ENCODE measurements at regions of chr1 and their contacts with region 1.

Region 1: GRCh38 chr1:235843461-235843961 is 23.2 kb downstream of the LYST start:
- DNase-seq: peak; percentile 56
- H3K4me3 Mint-ChIP-seq: no peak overlapping the region
- H3K27ac Mint-ChIP-seq: no peak overlapping the region
- H3K4me1 Mint-ChIP-seq: peaks cover 61% of the 10 kb centered on the region
- H3K27me3 Mint-ChIP-seq: no peaks in the 10 kb centered on the region

Region 2: DNA sequence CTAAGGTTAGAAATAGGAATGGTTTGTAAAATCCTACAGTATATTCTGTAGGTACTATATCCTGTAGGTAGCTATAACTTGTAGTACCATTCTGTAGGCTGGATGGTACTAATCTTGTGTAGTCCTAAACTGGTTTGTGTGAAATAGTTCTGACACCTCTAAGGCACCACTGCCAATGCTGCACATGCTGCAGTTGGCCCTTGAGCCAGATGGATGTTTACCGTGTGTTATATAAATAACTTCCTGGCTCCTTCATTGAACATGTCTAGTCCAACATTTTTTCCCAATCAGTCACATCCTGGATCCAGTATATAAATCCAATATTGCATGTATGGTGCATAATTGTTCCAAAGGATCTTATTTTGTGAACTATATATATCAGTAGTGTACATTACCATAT is 104.4 kb before region 1 on chr1:
- intact Hi-C with region 1: loop called (anchors 10 kb)
- DNase-seq: no peak
- H3K4me3 Mint-ChIP-seq: no peak overlapping the region
- H3K27ac Mint-ChIP-seq: no peak overlapping the region
- H3K4me1 Mint-ChIP-seq: peaks cover 4% of the 10 kb centered on the region
- H3K27me3 Mint-ChIP-seq: no peaks in the 10 kb centered on the region

Region 3: DNA sequence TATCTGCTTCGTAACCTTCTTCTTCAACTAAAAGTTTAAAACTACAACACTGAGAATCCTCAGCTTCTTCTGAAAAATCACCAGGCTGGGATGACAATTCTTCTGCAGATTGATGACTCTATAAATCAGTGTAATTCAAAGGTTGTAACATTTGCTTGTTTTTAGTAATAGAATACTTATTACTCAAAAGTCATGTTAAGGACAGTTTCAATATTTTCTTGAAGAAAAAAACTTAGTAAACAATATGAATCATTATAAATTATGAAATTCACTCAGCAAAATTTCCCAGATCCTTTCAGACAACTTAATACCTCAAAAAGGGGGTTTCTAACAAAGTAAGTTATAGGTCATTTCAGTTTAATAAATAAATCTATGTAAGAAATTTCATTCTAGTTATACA is 40.6 kb before region 1 on chr1:
- intact Hi-C with region 1: loop called (anchors 5 kb)
- DNase-seq: no peak
- H3K4me3 Mint-ChIP-seq: no peak overlapping the region
- H3K27ac Mint-ChIP-seq: no peak overlapping the region
- H3K4me1 Mint-ChIP-seq: no peaks in the 10 kb centered on the region
- H3K27me3 Mint-ChIP-seq: no peaks in the 10 kb centered on the region

Region 4: GRCh38 chr1:235855811-235856429 is 12.4 kb after region 1 on chr1:
- intact Hi-C with region 1: loop called (anchors 1 kb)
- DNase-seq: no peak
- H3K4me3 Mint-ChIP-seq: no peak overlapping the region
- H3K27ac Mint-ChIP-seq: peak overlapping the region; percentile 56
- H3K4me1 Mint-ChIP-seq: peaks cover 32% of the 10 kb centered on the region
- H3K27me3 Mint-ChIP-seq: no peaks in the 10 kb centered on the region

Region 5: DNA sequence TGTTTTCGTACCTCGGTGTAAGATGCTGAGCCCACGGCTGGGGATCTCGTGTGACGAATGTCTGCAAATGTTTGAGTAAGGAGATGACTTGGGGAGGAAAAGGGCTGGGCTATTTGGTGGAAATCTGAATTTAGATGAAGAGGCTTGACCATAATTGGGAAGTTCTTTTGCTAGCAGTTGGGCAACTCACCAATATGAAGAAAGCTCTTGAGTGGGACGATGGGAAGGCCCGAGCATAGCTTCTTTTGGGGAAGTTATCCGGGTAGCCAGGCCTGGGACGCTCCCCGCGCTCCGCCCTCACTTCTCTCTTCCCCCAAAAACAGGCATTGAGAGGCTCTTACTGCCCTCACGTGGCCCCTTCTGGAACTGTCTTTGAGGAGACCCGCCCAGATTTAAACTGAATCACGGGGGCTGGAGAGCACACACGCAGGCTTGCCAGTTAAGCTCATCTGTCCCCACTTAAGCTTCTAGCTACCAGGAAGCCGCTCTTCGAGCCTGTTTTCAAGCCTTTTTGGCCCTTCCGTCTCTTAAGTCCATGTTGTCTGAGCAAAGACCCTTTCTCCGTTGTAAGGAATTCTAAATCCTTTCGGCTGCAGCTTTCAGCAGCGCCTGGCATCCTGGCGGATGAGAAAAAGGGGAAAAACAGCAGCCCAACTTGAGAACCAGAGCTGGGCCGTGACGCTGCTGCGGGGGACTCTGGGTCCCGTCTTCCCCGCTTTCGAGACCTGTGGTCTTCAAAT is 128.2 kb after region 1 on chr1:
- intact Hi-C with region 1: loop called (anchors 5 kb)
- DNase-seq: peak; percentile 96
- H3K4me3 Mint-ChIP-seq: peak overlapping the region; percentile 77
- H3K27ac Mint-ChIP-seq: peak overlapping the region; percentile 85
- H3K4me1 Mint-ChIP-seq: peaks cover 16% of the 10 kb centered on the region
- H3K27me3 Mint-ChIP-seq: peaks cover 6% of the 10 kb centered on the region

Measured in activated CD4-positive, alpha-beta T cell treated with anti-CD3 and anti-CD28 coated beads, Interleukin-2, amount 10 ng/mL, durations not matched to agents 24 days and 14 days (primary cell).